OCI-LY7 (cell line): ENCODE measurements at regions of chr12 and their contacts with region 1.

Region 1: GRCh38 chr12:40224439-40225291 is at the start of gene LRRK2:
- DNase-seq: peak; percentile 93
- H3K4me3 ChIP-seq: peak within 1 kb of the TSS; percentile 78
- H3K27ac ChIP-seq: peak within 1 kb of the TSS; percentile 99
- H3K4me1 ChIP-seq: peaks cover 60% of the 10 kb centered on the region
- CTCF ChIP-seq: peak; percentile 26; the same call in 1 of the 2 replicates
- total RNA-seq, gene LRRK2: 5.9 and 10.1 TPM in 2 replicates

Region 2: GRCh38 chr12:40045656-40046055 is 179.0 kb before region 1 on chr12:
- CTCF ChIA-PET with region 1: no interaction called
- POLR2A ChIA-PET with region 1: interaction called, 4 read pairs
- intact Hi-C with region 1: loop called (anchors 5 kb)
- DNase-seq: no peak
- H3K4me3 ChIP-seq: no peak overlapping the region
- H3K27ac ChIP-seq: no peak overlapping the region
- H3K4me1 ChIP-seq: peaks cover 51% of the 10 kb centered on the region
- CTCF ChIP-seq: no peak

Region 3: GRCh38 chr12:40152783-40153383 is 71.8 kb before region 1 on chr12:
- CTCF ChIA-PET with region 1: no interaction called
- POLR2A ChIA-PET with region 1: interaction called, 4 read pairs
- intact Hi-C with region 1: loop called (anchors 2 kb)
- DNase-seq: peak; percentile 77
- H3K4me3 ChIP-seq: no peak overlapping the region
- H3K27ac ChIP-seq: no peak overlapping the region
- H3K4me1 ChIP-seq: peaks cover 16% of the 10 kb centered on the region
- CTCF ChIP-seq: peak; percentile 98

Region 4: DNA sequence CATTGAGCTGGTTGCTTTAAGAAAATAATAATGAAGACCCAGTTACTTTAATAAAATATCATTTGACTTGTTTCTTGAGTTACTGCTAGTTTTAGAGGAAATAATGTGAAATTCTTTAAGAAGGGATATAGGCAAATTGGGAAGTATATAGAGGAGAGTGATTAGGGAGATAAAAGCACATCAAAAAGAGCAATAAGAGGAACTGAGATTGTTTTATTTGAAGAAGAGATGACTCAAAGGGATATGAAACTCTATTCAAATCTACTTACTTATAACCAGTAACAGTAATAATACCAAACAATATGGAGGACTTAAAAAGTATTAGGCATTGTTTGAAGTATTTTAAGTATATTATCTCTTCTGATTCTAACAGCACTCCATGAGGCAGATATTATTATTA is 37.3 kb after region 1 on chr12:
- CTCF ChIA-PET with region 1: no interaction called
- POLR2A ChIA-PET with region 1: interaction called, 14 read pairs
- intact Hi-C with region 1: loop called (anchors 1 kb)
- DNase-seq: peak; percentile 75
- H3K4me3 ChIP-seq: peak overlapping the region; percentile 39
- H3K27ac ChIP-seq: peak overlapping the region; percentile 92
- H3K4me1 ChIP-seq: peaks cover 50% of the 10 kb centered on the region
- CTCF ChIP-seq: no peak